ENCODE measurements at regions of chr5 and their contacts with region 1.

Region 1: DNA sequence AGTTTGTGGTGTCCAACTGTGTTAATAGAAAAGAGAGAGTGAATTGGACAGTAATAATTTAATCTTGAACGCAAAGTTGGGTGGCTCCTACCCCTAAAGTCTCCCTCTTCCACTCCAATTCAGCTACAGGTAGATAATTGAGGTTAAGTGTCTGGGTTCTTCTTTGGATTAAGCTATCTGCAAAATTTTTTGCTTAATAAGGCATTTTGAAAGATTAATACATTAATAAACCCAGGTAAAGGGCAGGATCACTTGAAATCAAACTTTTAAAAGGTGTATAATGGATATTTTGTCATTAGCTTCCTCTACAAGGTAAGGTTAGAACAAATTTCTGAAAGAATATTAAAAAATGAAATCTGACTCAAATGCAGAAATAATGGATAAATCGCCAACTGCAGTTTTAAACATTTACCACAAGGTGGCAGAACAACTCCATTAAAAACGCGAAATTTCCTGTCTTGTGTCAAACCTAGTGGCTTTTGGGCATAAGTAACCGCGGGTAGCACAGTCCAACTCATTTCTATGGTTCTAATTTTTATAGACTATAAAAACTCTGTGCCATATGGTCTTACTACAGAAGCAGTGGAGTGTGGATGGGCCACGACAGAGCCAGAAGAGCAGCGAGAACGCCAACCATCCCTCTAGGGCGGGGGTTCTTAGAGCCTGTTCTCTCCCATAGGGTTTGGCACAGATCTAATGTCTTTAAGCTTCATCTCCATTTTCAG is 276.5 kb downstream of the ARHGEF28 start:
- DNase-seq: peak; percentile 63
- ATAC-seq: peak; percentile 36; the same call in 1 of the 2 replicates
- H3K4me3 ChIP-seq: no peak overlapping the region
- H3K27ac ChIP-seq: no peak overlapping the region
- H3K4me1 ChIP-seq: peaks cover 18% of the 10 kb centered on the region in 2 experiments; a peak in 3 of 4 replicates
- H3K27me3 ChIP-seq: no peaks in the 10 kb centered on the region
- CTCF ChIP-seq: peak; percentile 46 to 87 (median 64); a peak in 5 of 6 replicates
- POLR2A ChIP-seq: no peak
- RAD21 ChIP-seq: peak; percentile 89

Region 2: DNA sequence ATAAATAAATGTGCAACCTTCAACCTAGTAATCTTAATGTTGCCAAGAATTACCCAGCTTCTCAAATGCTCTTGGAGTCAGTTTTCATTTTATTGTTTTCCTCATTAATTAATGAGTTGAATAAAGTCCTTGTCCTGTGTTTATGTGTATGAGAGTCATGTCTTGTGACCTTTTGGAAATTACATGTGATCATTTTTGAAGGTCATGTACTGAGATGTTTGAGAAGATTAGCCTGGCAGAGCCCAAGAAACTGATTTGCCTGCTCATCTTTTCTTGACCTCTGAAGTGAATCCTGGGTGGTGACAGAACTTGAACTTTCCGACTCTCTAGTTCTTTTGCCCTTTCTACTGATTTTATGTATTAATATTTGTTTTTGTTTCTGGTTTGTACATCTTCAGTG is 352.5 kb before region 1 on chr5:
- CTCF ChIA-PET with region 1: no interaction called
- POLR2A ChIA-PET with region 1: no interaction called
- RAD21 ChIA-PET with region 1: no interaction called
- intact Hi-C with region 1: no loop called
- DNase-seq: no peak
- ATAC-seq: no peak
- H3K4me3 ChIP-seq: no peak overlapping the region
- H3K27ac ChIP-seq: no peak overlapping the region
- H3K4me1 ChIP-seq: no peaks in the 10 kb centered on the region
- H3K27me3 ChIP-seq: no peaks in the 10 kb centered on the region
- CTCF ChIP-seq: no peak
- POLR2A ChIP-seq: no peak
- RAD21 ChIP-seq: no peak

Region 3: DNA sequence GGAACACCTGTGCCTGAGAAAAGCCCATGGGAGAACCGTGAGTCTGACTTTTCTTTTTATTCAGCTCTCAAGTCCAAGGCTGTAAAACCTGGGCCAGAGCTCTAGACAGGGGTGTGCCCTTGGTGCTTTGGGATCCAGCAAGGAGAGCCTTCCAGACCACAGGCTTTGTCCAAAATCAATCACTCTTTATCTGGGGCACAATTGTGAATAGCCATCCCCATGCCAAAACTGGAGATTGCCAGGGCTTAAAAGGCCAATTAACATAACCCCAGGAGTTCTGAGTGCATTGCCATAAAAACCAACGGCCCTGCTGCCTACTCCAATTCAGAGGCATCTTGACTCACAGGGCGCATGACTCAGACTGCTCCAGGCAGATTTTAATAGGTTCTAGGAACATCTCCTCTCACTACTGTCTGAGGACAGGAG is 115.3 kb after region 1 on chr5:
- CTCF ChIA-PET with region 1: no interaction called
- POLR2A ChIA-PET with region 1: no interaction called
- RAD21 ChIA-PET with region 1: no interaction called
- intact Hi-C with region 1: loop called (anchors 5 kb)
- DNase-seq: peak; percentile 73
- ATAC-seq: peak; percentile 82
- H3K4me3 ChIP-seq: no peak overlapping the region; a peak in 1 of 4 replicates
- H3K27ac ChIP-seq: peak overlapping the region; percentile 52
- H3K4me1 ChIP-seq: peaks cover 18 to 23% of the 10 kb centered on the region in 2 experiments
- H3K27me3 ChIP-seq: peaks cover 20% of the 10 kb centered on the region; the same call in 1 of the 2 replicates
- CTCF ChIP-seq: no peak
- POLR2A ChIP-seq: no peak
- RAD21 ChIP-seq: no peak

Region 4: DNA sequence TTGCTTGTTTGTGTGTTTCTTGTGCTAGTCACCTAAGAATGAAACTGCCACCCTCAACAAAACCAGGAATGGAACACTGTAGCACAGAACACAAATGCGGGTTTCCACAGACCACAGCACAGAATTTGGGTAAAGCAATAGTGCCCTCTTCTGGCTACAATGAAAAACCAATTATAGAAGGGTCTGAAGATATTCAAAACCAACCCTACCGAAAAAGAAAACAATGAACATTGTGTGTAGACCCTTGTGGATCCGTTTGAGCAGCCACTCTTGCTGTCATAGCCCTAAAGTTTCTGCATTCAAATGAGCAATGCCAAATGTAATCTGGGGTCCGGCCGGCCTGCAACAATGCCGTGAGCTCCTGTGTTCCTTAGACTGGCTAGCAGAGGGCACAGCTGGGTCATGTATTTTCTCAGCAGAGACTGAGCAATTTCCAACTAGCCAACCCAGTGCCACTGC is 746.4 kb after region 1 on chr5:
- CTCF ChIA-PET with region 1: interaction called, 18 read pairs
- POLR2A ChIA-PET with region 1: no interaction called
- RAD21 ChIA-PET with region 1: interaction called, 3 read pairs
- intact Hi-C with region 1: loop called (anchors 1 kb)
- DNase-seq: no peak
- ATAC-seq: peak; percentile 93
- H3K4me3 ChIP-seq: no peak overlapping the region
- H3K27ac ChIP-seq: no peak overlapping the region
- H3K4me1 ChIP-seq: peaks cover 12 to 14% of the 10 kb centered on the region in 2 experiments; a peak in 3 of 4 replicates
- H3K27me3 ChIP-seq: no peaks in the 10 kb centered on the region
- CTCF ChIP-seq: peak; percentile 52 to 83 (median 83)
- POLR2A ChIP-seq: no peak
- RAD21 ChIP-seq: peak; percentile 95

Region 5: GRCh38 chr5:74919487-74919886 is 1017.0 kb after region 1 on chr5:
- CTCF ChIA-PET with region 1: interaction called, 3 read pairs
- POLR2A ChIA-PET with region 1: no interaction called
- RAD21 ChIA-PET with region 1: no interaction called
- intact Hi-C with region 1: loop called (anchors 5 kb)
- DNase-seq: peak; percentile 47
- ATAC-seq: peak; percentile 88
- H3K4me3 ChIP-seq: no peak overlapping the region
- H3K27ac ChIP-seq: no peak overlapping the region
- H3K4me1 ChIP-seq: peaks cover 0 to 3% of the 10 kb centered on the region in 2 experiments; a peak in 1 of 4 replicates
- H3K27me3 ChIP-seq: no peaks in the 10 kb centered on the region
- CTCF ChIP-seq: peak; percentile 43 to 61 (median 60); a peak in 5 of 6 replicates
- POLR2A ChIP-seq: no peak
- RAD21 ChIP-seq: peak; percentile 78

Measured in HCT116 (cell line).